PC-9 (cell line): ENCODE measurements at regions of chr2 and their contacts with region 1.

Region 1: GRCh38 chr2:8536678-8537561 is 144.9 kb upstream of the ID2 start:
- DNase-seq: no peak
- H3K4me3 ChIP-seq: no peak overlapping the region
- H3K27ac ChIP-seq: no peak overlapping the region
- H3K4me1 ChIP-seq: peaks cover 9% of the 10 kb centered on the region; the same call in 1 of the 2 replicates
- H3K27me3 ChIP-seq: peaks cover 85% of the 10 kb centered on the region
- CTCF ChIP-seq: no peak

Region 2: GRCh38 chr2:8030573-8031303 is 506.2 kb before region 1 on chr2:
- CTCF ChIA-PET with region 1: no interaction called
- POLR2A ChIA-PET with region 1: no interaction called
- intact Hi-C with region 1: no loop called
- DNase-seq: no peak
- H3K4me3 ChIP-seq: no peak overlapping the region
- H3K27ac ChIP-seq: no peak overlapping the region
- H3K4me1 ChIP-seq: no peaks in the 10 kb centered on the region
- H3K27me3 ChIP-seq: peaks cover 53% of the 10 kb centered on the region
- CTCF ChIP-seq: no peak

Region 3: DNA sequence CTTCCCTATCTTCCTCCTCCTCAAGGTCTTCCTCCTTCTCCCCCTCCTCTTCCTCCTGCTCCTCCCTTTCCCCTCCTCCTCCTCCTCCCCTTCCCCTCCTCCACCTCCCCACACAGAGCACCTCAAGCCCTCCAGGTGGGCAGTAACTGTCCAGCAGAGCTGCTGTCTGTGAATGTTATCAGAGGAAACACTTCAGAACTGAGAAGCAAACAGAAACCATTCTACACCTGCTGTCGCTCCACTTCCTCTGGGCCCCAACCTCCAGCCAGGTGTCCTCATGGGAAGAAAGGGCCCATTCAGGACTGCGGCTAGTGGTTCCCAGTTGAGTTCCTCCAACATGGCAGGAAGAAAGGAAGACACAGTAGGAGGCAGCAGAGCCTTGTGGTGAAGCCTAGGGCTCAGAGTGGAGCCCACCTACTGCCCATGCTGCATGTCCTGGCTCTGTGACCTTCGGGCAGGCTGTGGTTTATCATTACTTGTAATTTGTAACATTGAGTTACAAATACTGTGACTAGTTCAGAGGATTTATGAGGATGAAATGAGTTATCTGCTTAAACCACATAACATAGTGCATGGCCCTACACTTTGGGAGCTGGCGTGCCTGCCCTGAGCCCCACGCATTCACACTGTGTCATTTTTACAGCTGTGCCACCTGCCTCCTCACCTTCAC is 20.9 kb before region 1 on chr2:
- CTCF ChIA-PET with region 1: interaction called, 15 read pairs
- POLR2A ChIA-PET with region 1: no interaction called
- intact Hi-C with region 1: no loop called
- DNase-seq: no peak
- H3K4me3 ChIP-seq: no peak overlapping the region
- H3K27ac ChIP-seq: no peak overlapping the region
- H3K4me1 ChIP-seq: no peaks in the 10 kb centered on the region
- H3K27me3 ChIP-seq: peaks cover 89% of the 10 kb centered on the region
- CTCF ChIP-seq: no peak